ENCODE measurements at regions of chr11 and their contacts with region 1.

Region 1: DNA sequence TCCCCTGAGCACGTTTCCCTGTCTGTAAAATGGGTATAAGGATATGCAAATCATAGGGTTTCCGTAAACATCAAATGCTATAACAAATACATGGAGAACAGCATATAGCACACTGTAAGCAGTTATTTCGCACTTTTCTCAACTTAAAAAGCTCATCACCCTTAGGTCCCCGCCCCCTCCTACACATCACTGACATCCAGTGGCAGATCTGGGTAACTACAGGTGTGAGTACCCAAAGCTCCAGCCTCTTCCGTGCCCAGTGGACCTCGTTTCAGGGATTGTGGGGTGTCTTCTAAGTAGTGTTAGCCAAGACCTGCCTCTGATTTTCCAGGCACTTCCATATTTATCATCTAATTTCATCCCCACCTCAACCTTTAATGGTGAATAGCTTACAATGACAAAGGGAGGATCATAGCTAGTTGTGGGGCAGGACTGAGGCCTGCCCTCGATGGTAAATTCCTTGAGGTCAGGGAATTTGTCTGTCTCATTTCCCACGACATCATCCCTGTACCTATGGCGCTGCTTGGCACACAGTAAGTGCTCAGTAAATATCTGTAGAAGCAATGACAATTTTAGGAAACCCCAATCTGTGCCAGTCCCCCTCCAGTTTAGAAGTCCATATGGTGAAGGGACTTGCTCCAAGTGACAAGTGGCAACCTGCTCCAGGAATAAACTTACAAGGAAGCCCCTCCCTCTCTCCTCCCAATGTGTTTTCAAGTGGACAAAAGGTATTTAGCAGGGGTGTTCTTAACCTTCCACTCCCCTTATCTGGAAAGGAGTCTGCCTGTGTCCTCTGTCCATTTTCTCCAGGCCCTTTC is 340.5 kb downstream of the TENM4 start:
- DNase-seq: no peak
- ATAC-seq: peak; percentile 96
- H3K4me3 ChIP-seq: no peak overlapping the region
- H3K27ac ChIP-seq: no peak overlapping the region
- H3K4me1 ChIP-seq: no peaks in the 10 kb centered on the region
- H3K27me3 ChIP-seq: no peaks in the 10 kb centered on the region; a peak in 1 of 4 replicates
- CTCF ChIP-seq: peak; percentile 67 to 78 (median 77)
- EP300 ChIP-seq: no peak
- POLR2A ChIP-seq: no peak
- RAD21 ChIP-seq: peak; percentile 75

Region 2: DNA sequence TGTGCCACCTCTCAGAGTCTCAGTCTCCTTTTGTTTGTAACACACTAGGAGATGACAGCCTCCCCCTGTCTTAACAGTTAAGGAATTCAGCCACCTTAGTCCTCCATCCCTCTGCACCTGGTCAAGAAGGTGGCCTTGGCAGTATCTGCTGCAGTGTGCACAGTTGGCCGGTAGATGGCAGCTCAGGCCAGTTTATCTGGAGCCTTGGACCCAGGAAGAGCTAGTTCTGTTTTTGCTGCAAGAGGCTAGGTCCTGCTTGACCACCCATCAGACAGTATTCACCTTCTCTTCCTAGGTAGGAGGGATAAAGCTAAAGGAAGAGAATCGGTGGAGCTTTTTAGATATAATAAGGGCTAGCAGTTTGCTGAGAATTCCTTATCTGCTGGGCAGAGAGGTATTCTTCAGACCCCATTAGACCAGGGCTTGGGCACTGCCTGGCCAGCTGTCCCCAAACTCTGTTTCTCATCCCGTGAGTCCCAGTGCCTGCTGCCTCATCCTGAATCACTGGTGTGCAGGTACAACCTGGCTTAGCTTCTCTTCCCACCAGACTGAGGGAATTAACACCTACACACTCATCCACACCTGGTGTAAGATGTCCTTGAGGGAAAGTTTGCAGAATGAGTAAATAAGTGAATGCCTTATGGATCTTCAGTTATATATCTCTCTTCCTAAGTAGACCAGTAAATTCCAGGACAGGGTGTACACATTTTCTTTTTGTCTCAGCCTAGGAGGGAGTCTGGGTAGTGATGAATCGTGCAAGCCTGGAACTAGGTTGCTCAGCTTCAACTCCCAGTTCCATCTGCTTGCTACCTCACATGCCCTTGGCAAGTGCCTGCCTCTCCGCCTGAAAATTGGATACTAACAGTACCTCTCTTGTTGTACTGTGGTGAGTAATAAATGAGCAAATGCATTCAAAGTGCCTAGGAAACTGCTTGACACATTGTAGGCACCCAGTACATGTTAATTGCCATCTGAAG is 454.8 kb before region 1 on chr11:
- CTCF ChIA-PET with region 1: interaction called, 110 read pairs
- POLR2A ChIA-PET with region 1: no interaction called
- RAD21 ChIA-PET with region 1: interaction called, 40 read pairs
- SMC1A ChIA-PET with region 1: interaction called, 18 read pairs
- in situ Hi-C with region 1: no loop called
- intact Hi-C with region 1: loop called (anchors 1 kb)
- DNase-seq: peak; percentile 35
- ATAC-seq: peak; percentile 95
- H3K4me3 ChIP-seq: no peak overlapping the region
- H3K27ac ChIP-seq: no peak overlapping the region
- H3K4me1 ChIP-seq: no peaks in the 10 kb centered on the region
- H3K27me3 ChIP-seq: peaks cover 0 to 6% of the 10 kb centered on the region in 2 experiments; a peak in 2 of 4 replicates
- CTCF ChIP-seq: peak; percentile 94 to 98 (median 97)
- EP300 ChIP-seq: no peak
- POLR2A ChIP-seq: no peak
- RAD21 ChIP-seq: peak; percentile 93

Region 3: DNA sequence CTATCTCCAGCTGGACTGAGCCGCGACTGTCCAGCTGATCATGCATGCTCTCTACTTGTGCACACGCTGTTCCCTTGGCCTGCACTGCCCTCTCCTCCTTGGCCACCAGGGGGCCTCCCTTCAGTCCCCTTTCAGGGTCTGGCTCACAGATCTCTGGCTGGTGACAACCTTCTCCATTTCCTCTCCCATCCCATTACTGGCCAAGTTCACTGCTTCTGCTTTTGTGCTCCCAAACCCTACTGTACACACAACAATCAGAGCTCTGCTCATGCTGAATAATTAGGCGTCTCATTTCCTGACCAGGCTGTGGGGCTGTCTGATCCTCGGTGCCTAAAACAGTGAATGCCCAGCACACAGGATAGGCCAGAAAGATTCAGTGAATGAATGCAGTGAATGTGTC is 301.6 kb before region 1 on chr11:
- CTCF ChIA-PET with region 1: interaction called, 79 read pairs
- POLR2A ChIA-PET with region 1: interaction called, 4 read pairs
- RAD21 ChIA-PET with region 1: interaction called, 22 read pairs
- SMC1A ChIA-PET with region 1: interaction called, 20 read pairs
- in situ Hi-C with region 1: no loop called
- intact Hi-C with region 1: loop called (anchors 1 kb)
- DNase-seq: no peak
- ATAC-seq: peak; percentile 99
- H3K4me3 ChIP-seq: no peak overlapping the region
- H3K27ac ChIP-seq: no peak overlapping the region
- H3K4me1 ChIP-seq: no peaks in the 10 kb centered on the region
- H3K27me3 ChIP-seq: peaks cover 0 to 1% of the 10 kb centered on the region in 2 experiments; a peak in 3 of 4 replicates
- CTCF ChIP-seq: peak; percentile 74 to 96 (median 87)
- EP300 ChIP-seq: no peak
- POLR2A ChIP-seq: no peak
- RAD21 ChIP-seq: peak; percentile 58

Region 4: GRCh38 chr11:79055856-79056642 is 44.3 kb before region 1 on chr11:
- CTCF ChIA-PET with region 1: interaction called, 11 read pairs
- POLR2A ChIA-PET with region 1: no interaction called
- RAD21 ChIA-PET with region 1: interaction called, 6 read pairs
- SMC1A ChIA-PET with region 1: interaction called, 4 read pairs
- in situ Hi-C with region 1: no loop called
- intact Hi-C with region 1: no loop called
- DNase-seq: no peak
- ATAC-seq: no peak
- H3K4me3 ChIP-seq: no peak overlapping the region
- H3K27ac ChIP-seq: no peak overlapping the region
- H3K4me1 ChIP-seq: no peaks in the 10 kb centered on the region
- H3K27me3 ChIP-seq: no peaks in the 10 kb centered on the region
- CTCF ChIP-seq: no peak
- EP300 ChIP-seq: no peak
- POLR2A ChIP-seq: no peak
- RAD21 ChIP-seq: no peak

Region 5: GRCh38 chr11:79076526-79077115 is 23.7 kb before region 1 on chr11:
- CTCF ChIA-PET with region 1: interaction called, 18 read pairs
- POLR2A ChIA-PET with region 1: no interaction called
- RAD21 ChIA-PET with region 1: interaction called, 3 read pairs
- SMC1A ChIA-PET with region 1: interaction called, 3 read pairs
- in situ Hi-C with region 1: no loop called
- intact Hi-C with region 1: no loop called
- DNase-seq: no peak
- ATAC-seq: peak; percentile 45; the same call in 1 of the 3 replicates
- H3K4me3 ChIP-seq: no peak overlapping the region
- H3K27ac ChIP-seq: no peak overlapping the region
- H3K4me1 ChIP-seq: no peaks in the 10 kb centered on the region
- H3K27me3 ChIP-seq: no peaks in the 10 kb centered on the region; a peak in 1 of 4 replicates
- CTCF ChIP-seq: peak; percentile 38 to 54 (median 43); a peak in 5 of 6 replicates
- EP300 ChIP-seq: no peak
- POLR2A ChIP-seq: no peak
- RAD21 ChIP-seq: peak; percentile 36; the same call in 1 of the 2 replicates

Region 6: DNA sequence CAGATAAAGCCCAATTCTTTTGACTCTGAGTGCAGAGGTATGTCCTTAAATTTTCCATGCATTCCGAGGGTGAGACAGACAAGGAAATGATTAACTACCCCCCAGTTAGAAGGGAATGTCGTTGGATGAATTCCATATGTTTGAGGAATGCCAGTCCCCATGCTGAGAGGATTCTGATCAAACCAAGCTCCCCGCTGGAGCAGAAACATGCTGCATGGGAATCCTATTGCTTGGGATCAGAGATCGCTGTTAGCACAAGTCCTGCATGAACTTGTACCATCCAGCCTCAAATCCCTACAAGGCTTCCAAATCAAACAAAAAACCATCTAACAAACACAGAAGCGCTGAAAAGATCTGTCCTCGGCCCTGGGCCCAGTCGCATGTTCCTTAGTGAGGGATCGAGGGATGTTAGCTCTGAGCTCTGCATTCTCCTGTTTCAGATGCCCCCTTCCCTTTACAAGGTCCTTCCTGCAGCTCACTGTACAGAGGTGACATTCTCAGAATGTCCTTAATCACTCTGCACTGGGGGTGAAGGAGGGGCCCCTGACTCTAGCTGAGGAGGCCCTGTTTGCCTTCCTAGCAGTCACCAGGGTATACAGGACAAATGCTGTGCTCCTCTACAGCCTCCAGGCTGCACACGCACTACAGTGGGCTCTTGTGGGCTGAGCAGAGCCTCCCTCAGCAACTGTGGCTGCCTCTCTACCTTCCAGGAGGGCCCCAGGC is 12.9 kb before region 1 on chr11:
- CTCF ChIA-PET with region 1: interaction called, 20 read pairs
- POLR2A ChIA-PET with region 1: no interaction called
- RAD21 ChIA-PET with region 1: interaction called, 6 read pairs
- SMC1A ChIA-PET with region 1: interaction called, 18 read pairs
- in situ Hi-C with region 1: no loop called
- intact Hi-C with region 1: no loop called
- DNase-seq: no peak
- ATAC-seq: no peak
- H3K4me3 ChIP-seq: no peak overlapping the region
- H3K27ac ChIP-seq: no peak overlapping the region
- H3K4me1 ChIP-seq: no peaks in the 10 kb centered on the region
- H3K27me3 ChIP-seq: no peaks in the 10 kb centered on the region; a peak in 1 of 4 replicates
- CTCF ChIP-seq: no peak
- EP300 ChIP-seq: no peak
- POLR2A ChIP-seq: no peak
- RAD21 ChIP-seq: no peak

Measured in GM12878 (cell line).